WTC11 (cell line): ENCODE measurements at regions of chr9 and their contacts with region 1.

Region 1: GRCh38 chr9:113657703-113658544 is 194.4 kb downstream of the RGS3 start:
- DNase-seq: peak; percentile 92
- ATAC-seq: peak; percentile 94
- H3K4me3 Mint-ChIP-seq: no peak overlapping the region
- H3K27ac Mint-ChIP-seq: no peak overlapping the region
- H3K4me1 Mint-ChIP-seq: peaks cover 12% of the 10 kb centered on the region
- H3K27me3 Mint-ChIP-seq: peaks cover 13% of the 10 kb centered on the region
- CTCF ChIP-seq: peak; percentile 83

Region 2: GRCh38 chr9:113410207-113410864 is 247.6 kb before region 1 on chr9 and contains the starts of genes C9orf43 and POLE3:
- CTCF ChIA-PET with region 1: interaction called, 13 read pairs
- POLR2A ChIA-PET with region 1: no interaction called
- DNase-seq: peak; percentile 90
- ATAC-seq: peak; percentile 90
- H3K4me3 Mint-ChIP-seq: peak within 1 kb of the TSS; percentile 87
- H3K27ac Mint-ChIP-seq: peak within 1 kb of the TSS; percentile 99
- H3K4me1 Mint-ChIP-seq: peaks cover 18% of the 10 kb centered on the region
- H3K27me3 Mint-ChIP-seq: no peaks in the 10 kb centered on the region
- CTCF ChIP-seq: no peak
- total RNA-seq, gene C9orf43: 0.28 to 0.46 TPM (median 0.30 TPM) in 3 replicates
- total RNA-seq, gene POLE3: 39.7 to 43.6 TPM (median 42.4 TPM) in 3 replicates

Region 3: GRCh38 chr9:113463418-113464285 is 194.3 kb before region 1 on chr9 and contains the start of gene RGS3:
- CTCF ChIA-PET with region 1: interaction called, 10 read pairs
- POLR2A ChIA-PET with region 1: no interaction called
- DNase-seq: peak; percentile 86
- ATAC-seq: peak; percentile 100
- H3K4me3 Mint-ChIP-seq: peak within 1 kb of the TSS; percentile 68
- H3K27ac Mint-ChIP-seq: no peak within 1 kb of the TSS
- H3K4me1 Mint-ChIP-seq: peaks cover 20% of the 10 kb centered on the region
- H3K27me3 Mint-ChIP-seq: peaks cover 40% of the 10 kb centered on the region
- CTCF ChIP-seq: no peak
- total RNA-seq, gene RGS3: 15.0 to 17.2 TPM (median 16.6 TPM) in 3 replicates

Region 4: GRCh38 chr9:113564498-113565237 is 93.3 kb before region 1 on chr9:
- CTCF ChIA-PET with region 1: interaction called, 13 read pairs
- POLR2A ChIA-PET with region 1: interaction called, 4 read pairs
- DNase-seq: peak; percentile 64
- ATAC-seq: peak; percentile 90
- H3K4me3 Mint-ChIP-seq: peak overlapping the region; percentile 74
- H3K27ac Mint-ChIP-seq: no peak overlapping the region
- H3K4me1 Mint-ChIP-seq: peaks cover 17% of the 10 kb centered on the region
- H3K27me3 Mint-ChIP-seq: no peaks in the 10 kb centered on the region; the same call in 1 of the 2 replicates
- CTCF ChIP-seq: no peak

Region 5: DNA sequence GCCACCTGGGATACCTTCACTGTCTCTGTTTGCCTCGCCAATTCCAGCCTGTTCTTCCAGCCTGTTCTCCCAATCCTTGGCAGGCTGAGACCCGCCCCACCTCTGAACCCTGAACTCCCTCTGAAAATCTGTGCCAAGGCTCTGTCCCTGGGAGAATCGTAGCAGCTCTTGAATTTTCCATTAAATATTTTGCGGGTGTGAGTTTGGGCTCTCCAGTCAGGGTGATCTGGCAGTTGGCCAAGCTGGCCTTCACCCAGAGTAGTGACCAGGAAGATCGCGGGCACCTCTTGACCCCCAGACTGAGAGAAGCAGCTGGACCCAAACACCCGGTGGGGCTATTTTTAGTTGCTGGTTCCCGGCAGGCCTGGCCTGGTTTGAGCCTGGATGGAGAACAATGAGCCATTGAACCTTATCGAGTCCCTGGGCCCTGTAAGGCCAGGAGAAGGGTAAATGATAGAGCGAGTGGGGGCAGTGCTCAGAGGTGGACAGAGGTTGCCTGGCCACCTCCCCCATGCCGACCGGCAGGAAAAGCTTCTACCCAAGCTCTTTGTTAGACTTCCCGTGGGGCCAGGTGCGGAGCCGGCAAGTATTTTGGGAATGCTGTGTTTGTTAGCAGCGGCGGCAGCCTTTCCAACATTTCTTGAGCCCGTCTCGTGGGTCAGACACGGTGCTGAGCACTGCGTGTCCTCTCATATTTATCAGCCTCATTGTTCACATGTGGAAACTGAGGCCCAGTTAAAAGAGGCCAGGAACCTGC is 48.2 kb before region 1 on chr9:
- CTCF ChIA-PET with region 1: interaction called, 962 read pairs
- POLR2A ChIA-PET with region 1: no interaction called
- DNase-seq: peak; percentile 58
- ATAC-seq: peak; percentile 80
- H3K4me3 Mint-ChIP-seq: peak overlapping the region; percentile 22; the same call in 1 of the 2 replicates
- H3K27ac Mint-ChIP-seq: peak overlapping the region; percentile 92
- H3K4me1 Mint-ChIP-seq: peaks cover 27% of the 10 kb centered on the region
- H3K27me3 Mint-ChIP-seq: no peaks in the 10 kb centered on the region
- CTCF ChIP-seq: no peak

Region 6: DNA sequence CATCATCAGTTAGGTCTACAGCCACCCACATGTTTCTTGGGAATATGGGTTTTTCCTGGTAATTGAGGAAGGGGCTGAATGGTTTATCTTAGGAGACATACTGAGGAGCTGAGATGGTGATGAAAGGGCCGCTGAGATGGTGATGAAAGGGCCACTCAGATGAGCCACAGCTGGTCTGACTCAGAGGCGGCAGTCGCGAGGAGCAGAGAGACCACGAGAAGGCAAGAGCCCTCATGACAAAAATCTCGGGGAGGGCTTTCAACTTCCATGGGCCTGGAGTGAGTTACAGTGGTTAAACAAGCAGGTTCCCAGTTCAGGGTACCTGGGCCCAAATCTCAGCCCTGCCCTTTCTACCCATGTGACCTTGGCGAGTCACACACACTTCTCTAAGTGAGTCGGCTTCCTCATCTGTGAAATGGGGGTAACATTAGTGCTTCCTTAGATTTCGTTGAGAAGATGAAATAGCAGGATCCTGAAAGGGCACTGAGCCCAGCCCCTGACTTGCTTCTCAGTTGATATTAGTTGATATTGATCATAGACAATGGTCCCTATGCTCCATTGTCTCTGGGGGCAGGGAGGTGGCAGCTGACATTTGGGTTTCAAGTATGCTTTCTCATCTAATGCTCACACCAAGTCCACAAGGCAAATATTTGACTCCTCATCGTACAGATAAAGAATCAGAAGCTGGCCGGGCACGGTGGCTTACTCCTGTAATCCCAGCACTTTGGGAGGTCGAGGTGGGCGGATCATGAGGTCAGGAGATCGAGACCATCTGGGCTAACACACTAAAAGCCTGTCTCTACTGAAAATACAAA is 24.9 kb before region 1 on chr9:
- CTCF ChIA-PET with region 1: interaction called, 18 read pairs
- POLR2A ChIA-PET with region 1: no interaction called
- DNase-seq: no peak
- ATAC-seq: no peak
- H3K4me3 Mint-ChIP-seq: no peak overlapping the region
- H3K27ac Mint-ChIP-seq: no peak overlapping the region
- H3K4me1 Mint-ChIP-seq: peaks cover 16% of the 10 kb centered on the region
- H3K27me3 Mint-ChIP-seq: peaks cover 73% of the 10 kb centered on the region
- CTCF ChIP-seq: no peak